CD4-positive, alpha-beta memory T cell (primary cell): ENCODE measurements at regions of chr1 and their contacts with region 1.

Region 1: GRCh38 chr1:45521398-45522323 is at the start of gene PRDX1:
- DNase-seq: peak; percentile 95
- H3K4me3 ChIP-seq: peak within 1 kb of the TSS; percentile 90 to 94
- H3K4me3 Mint-ChIP-seq: peak within 1 kb of the TSS; percentile 93 to 97 (median 96)
- H3K27ac ChIP-seq: peak within 1 kb of the TSS; percentile 87
- H3K27ac Mint-ChIP-seq: peak within 1 kb of the TSS; percentile 85 to 97 (median 93)
- H3K4me1 ChIP-seq: peaks cover 25% of the 10 kb centered on the region
- H3K4me1 Mint-ChIP-seq: peaks cover 17 to 41% (median 29%) of the 10 kb centered on the region in 4 donors
- H3K27me3 ChIP-seq: no peaks in the 10 kb centered on the region
- H3K27me3 Mint-ChIP-seq: no peaks in the 10 kb centered on the region
- total RNA-seq, gene PRDX1: 130 to 145 TPM

Region 2: GRCh38 chr1:45246760-45247159 is 274.9 kb before region 1 on chr1:
- CTCF ChIA-PET with region 1: no interaction called
- POLR2A ChIA-PET with region 1: no interaction called
- intact Hi-C with region 1: no loop called
- DNase-seq: peak in 3 of 5 donors; percentile 1 to 13 (median 9)
- H3K4me3 ChIP-seq: no peak overlapping the region
- H3K4me3 Mint-ChIP-seq: peak overlapping the region in 3 of 8 donors; percentile 3 to 50 (median 28)
- H3K27ac ChIP-seq: no peak overlapping the region
- H3K27ac Mint-ChIP-seq: peak overlapping the region; percentile 2 to 95 (median 52)
- H3K4me1 ChIP-seq: no peaks in the 10 kb centered on the region
- H3K4me1 Mint-ChIP-seq: peaks cover 6 to 13% (median 9%) of the 10 kb centered on the region in 4 donors
- H3K27me3 ChIP-seq: no peaks in the 10 kb centered on the region
- H3K27me3 Mint-ChIP-seq: peaks cover 0 to 4% of the 10 kb centered on the region in 2 donors

Region 3: DNA sequence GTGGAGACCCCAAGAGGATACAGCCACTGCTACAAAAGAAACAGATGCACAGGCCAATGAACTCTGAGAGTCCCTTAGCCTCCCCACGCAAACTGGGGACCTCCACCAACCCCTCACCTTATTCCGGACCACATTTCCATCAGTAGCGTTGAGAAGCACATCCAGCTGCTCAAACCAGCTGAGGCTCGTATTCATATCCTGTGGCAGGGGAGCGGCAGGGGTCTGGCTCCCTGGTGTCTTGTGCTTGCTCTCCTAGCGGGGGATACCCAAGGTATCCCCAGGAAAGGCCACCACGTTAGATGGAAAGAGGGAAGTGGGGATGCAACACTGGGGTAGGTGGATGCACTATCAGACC is 22.3 kb before region 1 on chr1:
- CTCF ChIA-PET with region 1: interaction called, 4 read pairs
- POLR2A ChIA-PET with region 1: interaction called, 85 read pairs
- intact Hi-C with region 1: loop called (anchors 1 kb)
- DNase-seq: peak in 1 of 5 donors; percentile 4
- H3K4me3 ChIP-seq: peak overlapping the region; percentile 62 to 88
- H3K4me3 Mint-ChIP-seq: peak overlapping the region; percentile 91 to 96 (median 95)
- H3K27ac ChIP-seq: peak overlapping the region; percentile 62
- H3K27ac Mint-ChIP-seq: peak overlapping the region; percentile 81 to 98 (median 96)
- H3K4me1 ChIP-seq: peaks cover 18% of the 10 kb centered on the region
- H3K4me1 Mint-ChIP-seq: peaks cover 31 to 34% (median 31%) of the 10 kb centered on the region in 4 donors
- H3K27me3 ChIP-seq: no peaks in the 10 kb centered on the region
- H3K27me3 Mint-ChIP-seq: no peaks in the 10 kb centered on the region

Region 4: DNA sequence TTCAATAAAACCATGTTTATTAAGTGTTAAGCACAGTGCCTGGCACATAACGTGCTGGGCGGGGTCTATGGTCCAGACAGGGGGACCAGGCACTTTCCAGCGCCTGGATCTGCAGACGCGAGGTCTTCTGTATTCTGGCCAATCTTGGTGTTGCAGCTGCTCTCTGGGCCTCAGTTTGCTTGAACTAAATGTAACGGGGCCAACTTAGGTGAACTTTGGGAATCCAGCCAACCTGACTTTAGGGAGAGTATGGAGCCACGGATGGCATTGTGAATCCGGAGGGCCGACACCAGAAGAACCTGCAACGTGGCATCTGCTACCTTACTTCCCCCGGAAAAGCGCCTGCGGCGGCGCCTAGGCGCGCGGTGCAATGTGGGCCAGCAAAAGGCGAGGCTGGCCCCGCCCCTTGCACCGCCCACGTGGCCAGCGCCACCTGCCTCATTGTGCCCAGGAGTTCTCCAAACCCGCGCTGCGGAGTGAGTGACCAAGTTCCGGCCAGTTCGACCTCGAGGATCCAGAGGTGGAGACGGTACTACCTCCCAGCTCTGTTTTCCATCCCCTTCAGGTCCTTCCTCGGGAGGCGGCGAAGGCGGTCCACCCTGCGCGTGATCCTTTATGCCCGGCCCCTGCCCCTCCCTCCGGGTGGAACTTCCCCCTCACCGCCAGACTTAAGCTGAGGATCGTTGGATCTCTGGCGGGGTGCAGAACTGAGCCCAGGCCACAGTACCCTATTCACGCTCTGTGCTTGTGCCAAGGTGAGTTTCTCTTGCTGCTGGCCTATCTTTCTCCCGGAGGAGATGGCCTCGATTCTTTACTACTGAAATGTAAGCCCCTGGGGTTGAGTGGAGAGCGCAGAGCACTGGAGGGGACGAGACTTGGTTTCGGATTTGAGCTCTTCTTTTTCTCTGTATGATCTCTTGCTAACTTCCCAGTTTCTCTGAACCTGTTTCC is 29.0 kb after region 1 on chr1 and contains the start of gene AKR1A1:
- CTCF ChIA-PET with region 1: interaction called, 6 read pairs
- POLR2A ChIA-PET with region 1: interaction called, 75 read pairs
- intact Hi-C with region 1: loop called (anchors 1 kb)
- DNase-seq: peak; percentile 86 to 89 (median 88)
- H3K4me3 ChIP-seq: peak within 1 kb of the TSS; percentile 82 to 87
- H3K4me3 Mint-ChIP-seq: peak within 1 kb of the TSS; percentile 95 to 98 (median 96)
- H3K27ac ChIP-seq: peak within 1 kb of the TSS; percentile 79
- H3K27ac Mint-ChIP-seq: peak within 1 kb of the TSS; percentile 92 to 98 (median 97)
- H3K4me1 ChIP-seq: peaks cover 23% of the 10 kb centered on the region
- H3K4me1 Mint-ChIP-seq: peaks cover 14 to 31% (median 22%) of the 10 kb centered on the region in 4 donors
- H3K27me3 ChIP-seq: no peaks in the 10 kb centered on the region
- H3K27me3 Mint-ChIP-seq: no peaks in the 10 kb centered on the region
- total RNA-seq, gene AKR1A1: 84.3 to 89.8 TPM

Region 5: GRCh38 chr1:45563843-45564242 is 42.2 kb after region 1 on chr1:
- CTCF ChIA-PET with region 1: interaction called, 74 read pairs
- POLR2A ChIA-PET with region 1: interaction called, 14 read pairs
- intact Hi-C with region 1: no loop called
- DNase-seq: no peak
- H3K4me3 ChIP-seq: no peak overlapping the region
- H3K4me3 Mint-ChIP-seq: no peak overlapping the region
- H3K27ac ChIP-seq: no peak overlapping the region
- H3K27ac Mint-ChIP-seq: peak overlapping the region in 1 of 7 donors; percentile 84
- H3K4me1 ChIP-seq: no peaks in the 10 kb centered on the region
- H3K4me1 Mint-ChIP-seq: peaks cover 0 to 4% (median 2%) of the 10 kb centered on the region in 4 donors
- H3K27me3 ChIP-seq: no peaks in the 10 kb centered on the region
- H3K27me3 Mint-ChIP-seq: no peaks in the 10 kb centered on the region

Region 6: DNA sequence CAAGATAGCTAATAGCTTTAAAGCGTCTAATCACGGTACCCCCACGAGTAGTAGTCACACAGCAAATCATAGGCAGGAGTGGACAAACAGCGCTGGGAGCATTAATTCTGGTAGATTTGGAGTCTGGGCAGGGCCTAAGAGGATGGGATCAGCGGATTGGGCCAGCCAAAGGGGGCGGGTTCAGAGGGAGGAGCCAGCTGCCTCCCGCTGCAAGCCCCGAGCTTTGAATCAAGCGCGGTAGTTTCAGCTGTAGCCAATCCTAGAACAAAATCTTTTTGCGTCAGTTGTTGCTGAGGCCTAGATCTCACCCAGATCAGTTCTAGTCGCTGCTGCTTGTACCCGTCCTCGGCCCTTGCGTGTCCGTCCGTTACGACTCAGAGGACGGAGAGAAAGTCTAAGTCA is 61.6 kb after region 1 on chr1:
- CTCF ChIA-PET with region 1: interaction called, 3 read pairs
- POLR2A ChIA-PET with region 1: interaction called, 49 read pairs
- intact Hi-C with region 1: no loop called
- DNase-seq: peak; percentile 95 to 97 (median 96)
- H3K4me3 ChIP-seq: peak overlapping the region; percentile 99
- H3K4me3 Mint-ChIP-seq: peak overlapping the region; percentile 93 to 100 (median 100)
- H3K27ac ChIP-seq: peak overlapping the region; percentile 88
- H3K27ac Mint-ChIP-seq: peak overlapping the region; percentile 94 to 100 (median 99)
- H3K4me1 ChIP-seq: peaks cover 26% of the 10 kb centered on the region
- H3K4me1 Mint-ChIP-seq: peaks cover 20 to 42% (median 28%) of the 10 kb centered on the region in 4 donors
- H3K27me3 ChIP-seq: no peaks in the 10 kb centered on the region
- H3K27me3 Mint-ChIP-seq: no peaks in the 10 kb centered on the region

Region 7: GRCh38 chr1:45694823-45695222 is 173.2 kb after region 1 on chr1:
- CTCF ChIA-PET with region 1: no interaction called
- POLR2A ChIA-PET with region 1: no interaction called
- intact Hi-C with region 1: no loop called
- DNase-seq: no peak
- H3K4me3 ChIP-seq: no peak overlapping the region
- H3K4me3 Mint-ChIP-seq: no peak overlapping the region
- H3K27ac ChIP-seq: no peak overlapping the region
- H3K27ac Mint-ChIP-seq: peak overlapping the region in 1 of 7 donors; percentile 25
- H3K4me1 ChIP-seq: peaks cover 4% of the 10 kb centered on the region
- H3K4me1 Mint-ChIP-seq: peaks cover 0 to 16% (median 4%) of the 10 kb centered on the region in 4 donors
- H3K27me3 ChIP-seq: no peaks in the 10 kb centered on the region
- H3K27me3 Mint-ChIP-seq: no peaks in the 10 kb centered on the region